PC-3 (cell line): ENCODE measurements at regions of chr1 and their contacts with region 1.

Region 1: DNA sequence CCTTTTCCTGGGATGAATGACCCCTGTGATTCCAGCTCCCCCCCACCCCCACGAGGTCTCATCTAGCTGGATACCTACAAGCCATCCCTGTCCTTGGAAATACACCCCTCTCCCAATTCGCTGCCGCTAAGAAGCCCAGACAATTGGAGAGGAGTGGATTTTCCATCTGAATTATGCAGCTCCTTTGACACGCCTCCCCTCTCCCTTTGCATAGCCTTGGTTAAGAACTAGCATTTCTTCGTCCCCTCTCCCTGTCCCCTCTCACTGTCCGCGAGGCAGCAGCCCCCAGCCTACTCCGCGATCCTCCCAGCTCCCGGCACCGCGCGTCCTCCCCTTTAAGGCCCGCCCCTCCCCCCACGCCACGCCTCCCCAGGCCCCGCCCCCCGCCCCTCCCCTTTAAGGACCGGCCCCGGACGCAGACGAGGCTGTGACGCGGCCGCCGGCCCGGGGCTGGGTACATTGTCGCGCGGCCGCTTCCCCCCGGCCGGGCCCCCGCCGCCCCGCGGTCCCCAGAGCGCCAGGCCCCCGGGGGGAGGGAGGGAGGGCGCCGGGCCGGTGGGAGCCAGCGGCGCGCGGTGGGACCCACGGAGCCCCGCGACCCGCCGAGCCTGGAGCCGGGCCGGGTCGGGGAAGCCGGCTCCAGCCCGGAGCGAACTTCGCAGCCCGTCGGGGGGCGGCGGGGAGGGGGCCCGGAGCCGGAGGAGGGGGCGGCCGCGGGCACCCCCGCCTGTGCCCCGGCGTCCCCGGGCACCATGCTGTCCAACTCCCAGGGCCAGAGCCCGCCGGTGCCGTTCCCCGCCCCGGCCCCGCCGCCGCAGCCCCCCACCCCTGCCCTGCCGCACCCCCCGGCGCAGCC is at the start of gene MAPKAPK2:
- DNase-seq: peak; percentile 76
- ATAC-seq: peak; percentile 69
- H3K4me3 ChIP-seq: peak within 1 kb of the TSS; percentile 85
- H3K27ac ChIP-seq: peak within 1 kb of the TSS; percentile 65
- H3K4me1 ChIP-seq: peaks cover 28% of the 10 kb centered on the region
- H3K27me3 ChIP-seq: peaks cover 13% of the 10 kb centered on the region
- CTCF ChIP-seq: no peak
- total RNA-seq, gene MAPKAPK2: 98.5 and 133 TPM in 2 replicates

Region 2: GRCh38 chr1:206612129-206612876 is 72.4 kb before region 1 on chr1 and contains the start of gene EIF2D:
- CTCF ChIA-PET with region 1: interaction called, 3 read pairs
- POLR2A ChIA-PET with region 1: interaction called, 13 read pairs
- intact Hi-C with region 1: no loop called
- DNase-seq: peak; percentile 99
- ATAC-seq: peak; percentile 94
- H3K4me3 ChIP-seq: peak within 1 kb of the TSS; percentile 87
- H3K27ac ChIP-seq: peak within 1 kb of the TSS; percentile 53
- H3K4me1 ChIP-seq: peaks cover 7% of the 10 kb centered on the region
- H3K27me3 ChIP-seq: no peaks in the 10 kb centered on the region
- CTCF ChIP-seq: peak; percentile 98
- total RNA-seq, gene EIF2D: 107 and 110 TPM in 2 replicates

Region 3: GRCh38 chr1:206714331-206715058 is 29.8 kb after region 1 on chr1:
- CTCF ChIA-PET with region 1: interaction called, 9 read pairs
- POLR2A ChIA-PET with region 1: interaction called, 18 read pairs
- intact Hi-C with region 1: loop called (anchors 1 kb)
- DNase-seq: peak; percentile 99
- ATAC-seq: peak; percentile 76
- H3K4me3 ChIP-seq: peak overlapping the region; percentile 45
- H3K27ac ChIP-seq: peak overlapping the region; percentile 88
- H3K4me1 ChIP-seq: peaks cover 64% of the 10 kb centered on the region
- H3K27me3 ChIP-seq: no peaks in the 10 kb centered on the region
- CTCF ChIP-seq: no peak

Region 4: DNA sequence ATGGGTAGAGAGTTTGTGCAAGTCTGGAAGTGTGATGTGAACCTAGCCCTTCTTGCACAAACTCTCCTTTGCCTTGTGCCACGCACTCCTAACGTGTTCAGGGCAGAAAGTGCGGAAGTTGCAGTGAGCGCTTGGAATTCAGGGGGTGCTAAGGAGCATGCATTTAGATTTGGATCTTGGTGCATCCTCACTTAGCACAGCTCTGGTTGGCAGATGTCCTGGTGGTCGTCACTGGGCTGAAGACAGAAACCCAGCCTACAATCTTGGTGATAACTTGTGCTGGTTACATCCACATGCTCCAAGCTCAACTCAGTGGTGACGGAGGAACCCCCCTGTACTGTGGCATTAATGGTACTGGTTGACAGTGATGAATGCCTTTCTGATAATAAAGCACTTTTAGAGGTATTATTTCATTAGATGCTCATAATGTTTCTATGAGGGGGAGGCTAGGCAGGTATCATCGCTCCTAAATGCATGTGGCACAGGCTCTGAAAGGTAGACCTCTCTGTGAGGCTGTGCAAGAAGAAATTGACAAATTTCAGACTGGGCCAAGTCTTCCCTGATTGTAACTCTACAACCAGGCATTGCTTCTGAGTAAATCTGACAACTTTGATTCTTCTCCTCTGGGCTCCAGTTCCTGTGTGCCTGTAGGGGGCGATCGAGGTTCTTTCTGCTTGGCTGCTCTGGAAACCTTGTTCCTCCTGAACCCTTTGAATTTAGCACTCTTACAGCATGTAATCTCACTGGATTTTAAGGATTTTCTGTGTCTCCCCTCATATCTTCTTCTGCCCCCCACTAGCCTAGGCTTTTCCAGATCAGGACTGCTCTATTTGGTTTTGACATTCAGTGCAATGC is 40.6 kb after region 1 on chr1:
- CTCF ChIA-PET with region 1: no interaction called
- POLR2A ChIA-PET with region 1: no interaction called
- intact Hi-C with region 1: loop called (anchors 1 kb)
- DNase-seq: peak; percentile 69
- ATAC-seq: peak; percentile 47
- H3K4me3 ChIP-seq: no peak overlapping the region
- H3K27ac ChIP-seq: no peak overlapping the region; the same call in 1 of the 2 replicates
- H3K4me1 ChIP-seq: peaks cover 29% of the 10 kb centered on the region
- H3K27me3 ChIP-seq: no peaks in the 10 kb centered on the region
- CTCF ChIP-seq: peak; percentile 89